Naive thymus-derived CD4-positive, alpha-beta T cell (primary cell): ENCODE measurements at regions of chr22 and their contacts with region 1.

Region 1: GRCh38 chr22:36409911-36410756 is 22.4 kb upstream of the MYH9 start:
- DNase-seq: peak; percentile 46 to 77 (median 70)
- ATAC-seq: peak; percentile 89
- H3K4me3 ChIP-seq: peak overlapping the region; percentile 28
- H3K4me3 Mint-ChIP-seq: peak overlapping the region; percentile 59 to 82 (median 74)
- H3K27ac ChIP-seq: peak overlapping the region; percentile 70
- H3K27ac Mint-ChIP-seq: peak overlapping the region; percentile 69 to 92 (median 87)
- H3K4me1 ChIP-seq: peaks cover 31 to 40% of the 10 kb centered on the region in 2 donors
- H3K4me1 Mint-ChIP-seq: peaks cover 26 to 63% (median 55%) of the 10 kb centered on the region in 7 donors
- H3K27me3 ChIP-seq: no peaks in the 10 kb centered on the region
- H3K27me3 Mint-ChIP-seq: no peaks in the 10 kb centered on the region

Region 2: DNA sequence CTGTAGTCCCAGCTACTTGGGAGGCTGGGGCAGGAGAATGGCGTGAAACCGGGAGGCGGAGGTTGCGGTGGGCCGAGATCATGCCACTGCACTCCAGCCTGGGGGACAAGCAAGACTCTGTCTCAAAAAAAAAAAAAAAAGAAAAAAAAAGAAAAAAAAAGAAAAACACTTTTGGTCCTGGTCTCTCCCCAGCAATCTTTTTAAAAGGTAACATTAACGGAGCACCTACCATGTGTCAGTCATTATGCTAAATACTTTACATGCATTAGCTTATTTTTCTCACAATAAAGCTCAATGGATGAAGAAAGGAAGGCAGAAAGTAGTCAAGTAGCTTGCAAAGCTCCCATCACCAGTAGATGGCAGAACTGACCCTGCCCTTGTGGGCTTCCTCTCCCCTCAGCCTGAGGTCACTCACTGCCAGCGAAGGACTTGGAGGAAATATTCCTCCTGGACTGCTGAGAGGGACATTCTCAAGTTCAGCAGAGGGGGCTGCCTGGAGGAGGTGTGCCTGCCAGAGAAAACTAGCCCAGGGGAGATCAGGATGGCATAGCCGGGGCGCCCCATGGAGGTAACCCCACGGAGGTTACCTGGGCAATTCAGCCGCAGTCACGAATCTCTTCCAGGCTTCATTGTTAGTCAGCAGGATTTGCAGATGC is 265.1 kb before region 1 on chr22:
- CTCF ChIA-PET with region 1: no interaction called
- POLR2A ChIA-PET with region 1: no interaction called
- intact Hi-C with region 1: no loop called
- DNase-seq: peak in 4 of 9 donors; percentile 27 to 45 (median 38)
- ATAC-seq: peak; percentile 77
- H3K4me3 ChIP-seq: no peak overlapping the region
- H3K4me3 Mint-ChIP-seq: no peak overlapping the region
- H3K27ac ChIP-seq: peak overlapping the region; percentile 29
- H3K27ac Mint-ChIP-seq: peak overlapping the region in 8 of 9 donors; percentile 12 to 84 (median 53)
- H3K4me1 ChIP-seq: peaks cover 4 to 5% of the 10 kb centered on the region in 2 donors
- H3K4me1 Mint-ChIP-seq: peaks cover 4 to 61% (median 36%) of the 10 kb centered on the region in 7 donors
- H3K27me3 ChIP-seq: no peaks in the 10 kb centered on the region
- H3K27me3 Mint-ChIP-seq: no peaks in the 10 kb centered on the region

Region 3: GRCh38 chr22:36244522-36245391 is 165.4 kb before region 1 on chr22:
- CTCF ChIA-PET with region 1: no interaction called
- POLR2A ChIA-PET with region 1: no interaction called
- intact Hi-C with region 1: no loop called
- DNase-seq: peak in 1 of 9 donors; percentile 4
- ATAC-seq: no peak
- H3K4me3 ChIP-seq: no peak overlapping the region
- H3K4me3 Mint-ChIP-seq: no peak overlapping the region
- H3K27ac ChIP-seq: no peak overlapping the region
- H3K27ac Mint-ChIP-seq: peak overlapping the region in 1 of 9 donors; percentile 17
- H3K4me1 ChIP-seq: peaks cover 3 to 4% of the 10 kb centered on the region in 2 donors
- H3K4me1 Mint-ChIP-seq: peaks cover 3 to 11% (median 5%) of the 10 kb centered on the region in 7 donors
- H3K27me3 ChIP-seq: no peaks in the 10 kb centered on the region
- H3K27me3 Mint-ChIP-seq: peaks cover 0 to 10% (median 0%) of the 10 kb centered on the region in 5 donors

Region 4: GRCh38 chr22:36301384-36301828 is 108.7 kb before region 1 on chr22:
- CTCF ChIA-PET with region 1: interaction called, 13 read pairs
- POLR2A ChIA-PET with region 1: interaction called, 3 read pairs
- intact Hi-C with region 1: no loop called
- DNase-seq: peak; percentile 68 to 86 (median 80)
- ATAC-seq: peak; percentile 94
- H3K4me3 ChIP-seq: no peak overlapping the region
- H3K4me3 Mint-ChIP-seq: peak overlapping the region in 3 of 10 donors; percentile 6 to 40 (median 26)
- H3K27ac ChIP-seq: peak overlapping the region; percentile 15
- H3K27ac Mint-ChIP-seq: peak overlapping the region; percentile 56 to 81 (median 76)
- H3K4me1 ChIP-seq: peaks cover 0 to 3% of the 10 kb centered on the region in 2 donors
- H3K4me1 Mint-ChIP-seq: peaks cover 4 to 14% (median 11%) of the 10 kb centered on the region in 7 donors
- H3K27me3 ChIP-seq: no peaks in the 10 kb centered on the region
- H3K27me3 Mint-ChIP-seq: no peaks in the 10 kb centered on the region

Region 5: DNA sequence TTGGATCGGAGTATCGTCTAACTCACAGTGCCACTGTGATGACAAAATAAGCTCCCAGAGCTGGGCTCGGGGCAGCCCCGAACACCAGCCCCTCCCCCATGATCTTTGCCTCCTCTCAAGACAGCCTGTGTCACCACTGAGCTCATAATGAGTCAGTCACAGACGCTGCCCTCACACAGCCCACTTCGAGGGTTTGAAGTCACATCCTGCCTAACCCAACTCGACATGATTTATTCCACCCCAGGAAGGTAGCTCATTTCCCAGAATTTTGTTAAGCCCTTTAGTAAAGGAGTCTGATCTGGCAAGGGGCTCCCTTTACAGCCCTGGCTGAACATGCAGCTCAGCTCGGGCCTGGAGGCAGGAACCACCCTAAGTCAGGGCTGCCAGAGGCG is 45.1 kb before region 1 on chr22:
- CTCF ChIA-PET with region 1: no interaction called
- POLR2A ChIA-PET with region 1: interaction called, 6 read pairs
- intact Hi-C with region 1: loop called in 1 of 2 experiments (anchors 1 kb)
- DNase-seq: peak; percentile 55 to 98 (median 83)
- ATAC-seq: peak; percentile 97
- H3K4me3 ChIP-seq: no peak overlapping the region
- H3K4me3 Mint-ChIP-seq: peak overlapping the region; percentile 58 to 88 (median 82)
- H3K27ac ChIP-seq: peak overlapping the region; percentile 93
- H3K27ac Mint-ChIP-seq: peak overlapping the region; percentile 91 to 98 (median 96)
- H3K4me1 ChIP-seq: peaks cover 97 to 98% of the 10 kb centered on the region in 2 donors
- H3K4me1 Mint-ChIP-seq: peaks cover 73 to 100% (median 95%) of the 10 kb centered on the region in 7 donors
- H3K27me3 ChIP-seq: no peaks in the 10 kb centered on the region
- H3K27me3 Mint-ChIP-seq: no peaks in the 10 kb centered on the region

Region 6: DNA sequence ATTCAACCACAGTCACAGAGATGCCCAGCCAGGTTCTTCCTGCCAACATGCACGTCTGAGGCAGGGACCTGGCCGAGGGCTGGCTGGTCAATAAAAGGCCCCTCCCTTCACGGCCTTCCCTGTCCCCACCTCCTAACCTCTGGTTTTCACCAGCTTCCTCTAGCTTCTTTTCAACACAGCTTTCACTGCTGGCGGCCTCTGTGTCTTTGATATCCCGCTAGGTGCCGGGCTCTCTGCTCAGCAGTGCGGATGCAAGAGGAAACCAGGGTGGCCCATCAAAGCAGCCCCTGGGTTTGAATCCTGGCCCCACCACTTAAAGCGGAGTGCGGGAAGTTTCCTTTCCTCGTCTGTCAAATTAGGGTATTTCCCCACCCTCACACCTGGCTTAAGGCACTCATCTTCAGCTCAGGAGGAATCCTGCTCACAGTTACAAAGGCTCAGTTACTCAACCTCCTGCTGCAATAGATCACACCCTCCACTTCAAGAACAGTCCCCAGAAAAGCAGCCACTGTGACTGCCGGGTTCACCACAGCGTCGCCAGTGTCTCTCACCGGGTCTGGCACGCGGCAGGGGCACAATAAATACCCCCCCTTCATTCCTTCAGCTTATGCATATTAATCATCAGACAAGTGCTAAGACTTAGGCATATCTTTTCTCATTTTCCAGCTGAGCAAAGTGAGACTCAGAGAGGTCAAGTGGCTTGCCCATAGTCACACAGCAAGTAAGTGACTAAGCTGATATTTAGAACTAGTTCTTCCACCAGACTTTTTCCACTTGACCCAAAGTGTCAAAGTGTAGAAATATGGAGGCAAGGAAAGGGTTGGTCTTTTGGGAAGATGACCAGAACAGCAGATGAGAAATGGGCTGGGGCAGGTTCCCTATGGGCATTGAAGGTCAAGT is 25.6 kb after region 1 on chr22:
- CTCF ChIA-PET with region 1: no interaction called
- POLR2A ChIA-PET with region 1: interaction called, 5 read pairs
- intact Hi-C with region 1: loop called in 1 of 2 experiments (anchors 2 kb)
- DNase-seq: peak; percentile 35 to 89 (median 76)
- ATAC-seq: peak; percentile 93
- H3K4me3 ChIP-seq: peak overlapping the region; percentile 6
- H3K4me3 Mint-ChIP-seq: peak overlapping the region; percentile 61 to 82 (median 72)
- H3K27ac ChIP-seq: peak overlapping the region; percentile 60
- H3K27ac Mint-ChIP-seq: peak overlapping the region; percentile 83 to 96 (median 91)
- H3K4me1 ChIP-seq: peaks cover 20 to 21% of the 10 kb centered on the region in 2 donors
- H3K4me1 Mint-ChIP-seq: peaks cover 21 to 47% (median 32%) of the 10 kb centered on the region in 7 donors
- H3K27me3 ChIP-seq: no peaks in the 10 kb centered on the region
- H3K27me3 Mint-ChIP-seq: no peaks in the 10 kb centered on the region